SK-N-SH (cell line): ENCODE measurements at regions of chr6 and their contacts with region 1.

Region 1: GRCh38 chr6:43386492-43386891 is 17.0 kb upstream of the ZNF318 start:
- DNase-seq: peak; percentile 52
- H3K4me3 ChIP-seq: no peak overlapping the region
- H3K27ac ChIP-seq: no peak overlapping the region
- H3K4me1 ChIP-seq: peaks cover 0 to 2% of the 10 kb centered on the region in 2 experiments; a peak in 1 of 4 replicates
- H3K27me3 ChIP-seq: no peaks in the 10 kb centered on the region; the same call in 1 of the 2 replicates
- CTCF ChIP-seq: peak; percentile 76
- EP300 ChIP-seq: no peak
- RAD21 ChIP-seq: peak; percentile 77

Region 2: DNA sequence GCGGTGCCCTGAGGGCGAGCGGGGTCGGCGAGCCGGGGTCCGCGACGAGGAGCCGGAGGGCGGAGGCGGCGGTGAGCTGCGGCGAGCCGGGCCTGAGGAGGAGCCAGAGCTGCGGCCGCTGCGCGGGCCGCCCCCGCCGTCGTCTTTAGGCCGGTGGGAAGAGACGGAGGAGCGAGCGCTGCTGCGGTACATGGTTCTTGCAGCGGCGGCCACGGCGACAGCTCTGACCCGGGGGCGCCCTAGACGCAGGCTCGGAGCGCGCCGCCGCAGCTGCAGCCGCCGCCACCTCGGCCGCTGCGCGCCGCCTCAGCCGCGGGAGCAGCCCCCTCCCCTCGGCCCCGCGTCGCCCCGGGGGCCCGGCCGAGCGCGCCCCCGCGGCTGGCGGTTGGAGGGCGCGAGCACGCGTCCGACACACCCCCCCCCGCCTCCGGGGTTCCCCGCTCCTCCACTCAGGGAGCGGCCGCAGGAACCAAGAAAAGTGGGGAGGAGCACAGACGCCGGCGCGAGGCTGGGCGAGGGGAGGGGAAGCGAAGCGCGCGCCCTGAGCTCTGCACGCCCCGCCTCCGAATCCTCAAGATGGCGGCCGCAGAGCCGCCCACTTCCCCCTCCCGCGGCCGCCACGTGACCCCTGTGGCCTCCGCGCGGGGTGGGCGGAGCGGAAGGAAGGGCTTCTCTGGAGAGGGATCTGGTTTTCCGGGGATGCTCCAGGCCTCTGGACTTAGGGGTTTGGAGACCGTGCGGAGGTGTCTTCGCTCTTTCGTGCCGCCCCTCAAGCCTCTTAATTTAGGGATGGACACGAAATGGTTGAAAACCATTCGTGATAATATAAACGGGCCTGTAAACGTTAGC is 17.1 kb before region 1 on chr6 and contains the start of gene ZNF318:
- CTCF ChIA-PET with region 1: interaction called, 32 read pairs
- POLR2A ChIA-PET with region 1: no interaction called
- DNase-seq: peak; percentile 96
- H3K4me3 ChIP-seq: peak within 1 kb of the TSS; percentile 80 to 89
- H3K27ac ChIP-seq: peak within 1 kb of the TSS; percentile 65 to 89
- H3K4me1 ChIP-seq: peaks cover 8 to 9% of the 10 kb centered on the region in 2 experiments; a peak in 3 of 4 replicates
- H3K27me3 ChIP-seq: no peaks in the 10 kb centered on the region
- CTCF ChIP-seq: no peak
- EP300 ChIP-seq: no peak
- RAD21 ChIP-seq: no peak
- polyA plus RNA-seq, gene ZNF318: 6.3 and 7.8 TPM in 2 replicates

Region 3: GRCh38 chr6:43436577-43437282 is 50.2 kb after region 1 on chr6:
- CTCF ChIA-PET with region 1: interaction called, 11 read pairs
- POLR2A ChIA-PET with region 1: no interaction called
- DNase-seq: no peak
- H3K4me3 ChIP-seq: no peak overlapping the region
- H3K27ac ChIP-seq: no peak overlapping the region; a peak in 2 of 4 replicates
- H3K4me1 ChIP-seq: peaks cover 0 to 14% of the 10 kb centered on the region in 2 experiments; a peak in 1 of 4 replicates
- H3K27me3 ChIP-seq: no peaks in the 10 kb centered on the region
- CTCF ChIP-seq: no peak
- EP300 ChIP-seq: no peak
- RAD21 ChIP-seq: no peak

Region 4: DNA sequence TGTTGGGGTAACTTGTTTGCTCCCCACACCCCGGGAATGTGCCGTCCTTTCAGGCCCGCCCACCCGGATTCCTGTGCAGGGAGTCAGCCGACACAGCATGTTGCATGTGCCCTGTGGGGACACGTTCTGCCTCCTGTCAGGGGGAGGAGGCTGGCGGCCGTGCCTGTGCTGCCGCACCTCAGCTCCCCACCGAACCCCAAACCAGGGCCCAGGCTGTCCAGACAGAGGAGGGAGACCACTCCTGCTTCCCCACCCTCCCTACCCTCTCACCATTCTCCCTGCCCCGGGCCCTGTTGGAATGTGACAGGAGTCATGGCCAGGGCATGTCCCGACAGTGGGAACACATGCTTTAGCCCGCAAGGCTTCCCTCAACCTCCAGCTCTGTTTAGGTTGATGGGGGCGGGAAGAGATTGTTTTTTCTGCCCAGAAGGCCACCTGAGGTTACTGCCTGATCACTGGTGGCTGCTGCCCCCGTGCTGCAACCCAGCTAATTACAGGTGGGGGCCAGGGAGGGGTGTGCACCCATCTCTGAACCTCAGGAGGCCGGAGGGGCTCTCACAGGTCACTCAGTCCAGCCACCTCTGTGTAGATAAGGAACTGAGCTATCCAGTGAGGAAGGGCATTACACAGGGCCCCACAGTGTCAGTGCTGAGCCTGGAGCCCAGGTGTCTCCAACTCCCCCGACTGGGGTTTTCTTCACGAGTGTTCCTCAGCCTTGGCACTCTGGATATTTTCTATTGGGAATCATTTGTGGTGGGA is 110.1 kb after region 1 on chr6:
- CTCF ChIA-PET with region 1: interaction called, 22 read pairs
- POLR2A ChIA-PET with region 1: no interaction called
- DNase-seq: peak; percentile 80
- H3K4me3 ChIP-seq: no peak overlapping the region
- H3K27ac ChIP-seq: peak overlapping the region in 1 of 2 experiments; percentile 5; a peak in 1 of 4 replicates
- H3K4me1 ChIP-seq: peaks cover 14 to 43% of the 10 kb centered on the region in 2 experiments; a peak in 3 of 4 replicates
- H3K27me3 ChIP-seq: no peaks in the 10 kb centered on the region
- CTCF ChIP-seq: peak; percentile 51
- EP300 ChIP-seq: no peak
- RAD21 ChIP-seq: peak; percentile 69